ENCODE measurements at regions of chr10 and their contacts with region 1.

Region 1: DNA sequence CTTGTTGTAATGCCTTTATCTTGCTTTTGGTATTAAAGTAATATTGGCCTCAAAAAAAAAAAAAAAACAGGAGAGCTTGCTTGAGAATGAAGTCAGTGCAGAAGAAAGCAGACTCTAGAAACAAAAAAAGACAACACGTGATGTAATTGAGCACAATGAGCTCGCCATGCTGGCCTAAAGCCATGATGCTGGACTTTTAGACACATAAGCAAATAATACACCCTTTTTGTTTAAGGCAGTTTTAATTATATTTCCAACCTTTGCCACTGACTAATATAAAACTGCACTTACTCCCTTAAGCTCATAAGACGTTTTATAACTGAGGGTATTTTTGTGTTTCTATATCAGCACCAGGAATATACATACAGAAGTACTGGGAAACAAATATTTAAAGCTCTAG is 798.3 kb downstream of the KCNMA1 start:
- DNase-seq: no peak
- H3K4me3 ChIP-seq: no peak overlapping the region
- H3K27ac ChIP-seq: no peak overlapping the region
- H3K4me1 ChIP-seq: no peaks in the 10 kb centered on the region
- H3K27me3 ChIP-seq: no peaks in the 10 kb centered on the region
- CTCF ChIP-seq: no peak
- POLR2A ChIP-seq: no peak

Region 2: GRCh38 chr10:76922666-76923065 is 83.4 kb after region 1 on chr10:
- intact Hi-C with region 1: no loop called
- DNase-seq: no peak
- H3K4me3 ChIP-seq: no peak overlapping the region
- H3K27ac ChIP-seq: no peak overlapping the region
- H3K4me1 ChIP-seq: no peaks in the 10 kb centered on the region
- H3K27me3 ChIP-seq: no peaks in the 10 kb centered on the region
- CTCF ChIP-seq: no peak
- POLR2A ChIP-seq: no peak

Region 3: GRCh38 chr10:77090381-77091356 is 251.4 kb after region 1 on chr10:
- intact Hi-C with region 1: loop called (anchors 10 kb)
- DNase-seq: no peak
- H3K4me3 ChIP-seq: no peak overlapping the region
- H3K27ac ChIP-seq: no peak overlapping the region
- H3K4me1 ChIP-seq: no peaks in the 10 kb centered on the region
- H3K27me3 ChIP-seq: no peaks in the 10 kb centered on the region
- CTCF ChIP-seq: no peak
- POLR2A ChIP-seq: no peak